ENCODE measurements at regions of chr20 and their contacts with region 1.

Region 1: GRCh38 chr20:32779500-32780211 is 17.5 kb downstream of the DNMT3B start:
- DNase-seq: no peak
- H3K4me3 Mint-ChIP-seq: no peak overlapping the region
- H3K27ac Mint-ChIP-seq: no peak overlapping the region
- H3K4me1 Mint-ChIP-seq: peaks cover 35% of the 10 kb centered on the region
- H3K27me3 Mint-ChIP-seq: no peaks in the 10 kb centered on the region
- CTCF ChIP-seq: no peak

Region 2: GRCh38 chr20:32521780-32522525 is 257.7 kb before region 1 on chr20:
- CTCF ChIA-PET with region 1: no interaction called
- intact Hi-C with region 1: loop called (anchors 5 kb)
- DNase-seq: peak; percentile 89
- H3K4me3 Mint-ChIP-seq: no peak overlapping the region
- H3K27ac Mint-ChIP-seq: no peak overlapping the region
- H3K4me1 Mint-ChIP-seq: no peaks in the 10 kb centered on the region
- H3K27me3 Mint-ChIP-seq: peaks cover 94% of the 10 kb centered on the region
- CTCF ChIP-seq: peak; percentile 90

Region 3: DNA sequence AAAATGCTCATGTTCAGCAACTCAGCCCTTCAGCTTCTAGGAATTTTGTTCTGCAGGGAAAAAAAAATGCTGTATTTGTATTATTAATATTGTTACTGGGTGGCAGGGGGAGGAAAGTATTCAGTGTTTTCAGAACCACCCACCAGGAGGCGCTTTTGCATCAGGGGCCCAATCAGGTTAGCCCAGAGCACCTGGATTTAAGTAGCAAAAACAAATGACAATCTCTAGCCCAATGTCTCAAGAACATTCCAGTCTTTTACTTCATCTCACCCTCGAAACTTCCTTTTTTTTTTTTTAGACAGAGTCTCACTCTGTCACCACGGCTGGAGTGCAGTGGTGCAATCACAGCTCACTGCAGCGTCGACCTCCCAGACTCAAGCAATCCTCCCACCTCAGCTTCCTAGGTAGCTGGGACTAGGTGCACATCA is 105.3 kb before region 1 on chr20:
- CTCF ChIA-PET with region 1: interaction called, 85 read pairs
- intact Hi-C with region 1: loop called (anchors 1 kb)
- DNase-seq: peak; percentile 83
- H3K4me3 Mint-ChIP-seq: no peak overlapping the region
- H3K27ac Mint-ChIP-seq: no peak overlapping the region
- H3K4me1 Mint-ChIP-seq: no peaks in the 10 kb centered on the region
- H3K27me3 Mint-ChIP-seq: no peaks in the 10 kb centered on the region
- CTCF ChIP-seq: peak; percentile 88

Region 4: DNA sequence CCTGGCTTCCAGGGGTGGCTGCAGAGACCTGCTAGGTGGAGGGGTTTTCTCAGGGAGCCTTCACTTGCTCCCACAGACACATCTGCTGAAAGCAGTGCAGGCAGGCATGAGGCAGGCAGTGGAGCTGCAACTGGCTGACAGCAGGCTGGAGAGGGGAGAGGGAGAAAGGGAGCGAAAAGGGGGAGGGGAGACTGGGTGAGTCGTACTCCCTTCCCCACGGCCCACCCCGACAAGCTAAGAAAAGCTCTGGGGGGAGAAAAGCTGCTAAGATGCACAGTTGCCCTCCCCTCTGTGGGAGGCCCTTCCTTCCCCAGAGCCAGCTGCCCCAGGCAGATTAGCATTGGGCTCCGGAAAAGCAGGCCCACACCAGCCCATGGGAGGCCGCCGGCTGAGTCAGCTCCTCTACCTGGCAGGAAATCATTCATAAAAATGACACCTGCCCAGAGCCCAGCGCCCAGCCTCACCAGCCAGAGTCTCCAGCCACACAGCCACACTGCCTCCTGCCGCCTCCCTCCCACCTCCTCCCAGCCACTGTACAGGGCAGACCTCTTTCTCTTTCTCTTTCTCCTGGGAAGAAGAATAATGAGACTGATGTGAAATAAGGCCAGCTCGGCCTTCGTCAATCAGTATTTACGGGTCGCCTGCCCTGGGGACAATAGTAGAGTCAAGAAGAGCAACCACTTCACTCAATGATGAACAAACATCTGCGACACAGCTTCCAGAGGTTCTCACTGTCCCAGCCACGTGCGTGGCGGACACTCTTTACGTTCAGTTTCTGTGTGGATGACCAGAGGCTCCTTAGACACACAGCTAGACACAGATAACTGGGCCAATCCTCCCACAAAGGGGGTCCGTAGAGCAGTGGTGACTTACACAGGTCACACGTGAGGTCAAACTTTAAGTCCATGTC is 98.2 kb before region 1 on chr20:
- CTCF ChIA-PET with region 1: interaction called, 16 read pairs
- intact Hi-C with region 1: no loop called
- DNase-seq: peak; percentile 79
- H3K4me3 Mint-ChIP-seq: no peak overlapping the region
- H3K27ac Mint-ChIP-seq: no peak overlapping the region
- H3K4me1 Mint-ChIP-seq: peaks cover 11% of the 10 kb centered on the region
- H3K27me3 Mint-ChIP-seq: no peaks in the 10 kb centered on the region
- CTCF ChIP-seq: no peak

Region 5: GRCh38 chr20:32731393-32732266 is 48.0 kb before region 1 on chr20:
- CTCF ChIA-PET with region 1: interaction called, 8 read pairs
- intact Hi-C with region 1: loop called (anchors 5 kb)
- DNase-seq: peak; percentile 69
- H3K4me3 Mint-ChIP-seq: peak overlapping the region; percentile 45
- H3K27ac Mint-ChIP-seq: peak overlapping the region; percentile 86
- H3K4me1 Mint-ChIP-seq: peaks cover 27% of the 10 kb centered on the region
- H3K27me3 Mint-ChIP-seq: no peaks in the 10 kb centered on the region
- CTCF ChIP-seq: no peak

Region 6: DNA sequence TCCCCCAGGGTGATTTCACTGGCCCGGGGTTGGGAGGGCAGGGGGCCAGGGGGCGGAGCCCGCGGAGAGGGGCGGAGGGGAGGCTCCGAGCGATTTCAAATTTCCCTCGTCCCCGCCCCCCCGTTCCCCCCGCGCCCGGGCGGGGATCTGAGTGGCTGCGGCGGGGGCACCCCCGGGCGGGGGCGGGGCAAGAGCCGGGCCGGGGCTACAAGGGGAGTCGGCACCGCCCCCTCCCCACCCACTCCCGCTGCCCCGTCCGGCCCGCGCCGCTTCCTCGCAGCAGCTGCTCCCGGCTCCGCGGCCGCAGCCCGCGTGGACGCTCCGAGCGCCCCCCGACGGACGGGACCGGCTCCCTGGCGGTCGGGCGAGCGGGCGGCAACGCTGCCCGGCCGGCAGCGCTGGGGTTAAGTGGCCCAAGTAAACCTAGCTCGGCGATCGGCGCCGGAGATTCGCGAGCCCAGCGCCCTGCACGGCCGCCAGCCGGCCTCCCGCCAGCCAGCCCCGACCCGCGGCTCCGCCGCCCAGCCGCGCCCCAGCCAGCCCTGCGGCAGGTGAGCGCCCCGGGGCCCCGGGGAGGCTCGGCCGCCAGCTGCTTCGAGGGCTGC is 17.4 kb before region 1 on chr20 and contains the start of gene DNMT3B:
- CTCF ChIA-PET with region 1: interaction called, 33 read pairs
- intact Hi-C with region 1: no loop called
- DNase-seq: peak; percentile 92
- H3K4me3 Mint-ChIP-seq: peak within 1 kb of the TSS; percentile 93
- H3K27ac Mint-ChIP-seq: peak within 1 kb of the TSS; percentile 86
- H3K4me1 Mint-ChIP-seq: peaks cover 27% of the 10 kb centered on the region
- H3K27me3 Mint-ChIP-seq: no peaks in the 10 kb centered on the region
- CTCF ChIP-seq: no peak
- total RNA-seq, gene DNMT3B: 8.4 and 10.8 TPM in 2 replicates

Region 7: DNA sequence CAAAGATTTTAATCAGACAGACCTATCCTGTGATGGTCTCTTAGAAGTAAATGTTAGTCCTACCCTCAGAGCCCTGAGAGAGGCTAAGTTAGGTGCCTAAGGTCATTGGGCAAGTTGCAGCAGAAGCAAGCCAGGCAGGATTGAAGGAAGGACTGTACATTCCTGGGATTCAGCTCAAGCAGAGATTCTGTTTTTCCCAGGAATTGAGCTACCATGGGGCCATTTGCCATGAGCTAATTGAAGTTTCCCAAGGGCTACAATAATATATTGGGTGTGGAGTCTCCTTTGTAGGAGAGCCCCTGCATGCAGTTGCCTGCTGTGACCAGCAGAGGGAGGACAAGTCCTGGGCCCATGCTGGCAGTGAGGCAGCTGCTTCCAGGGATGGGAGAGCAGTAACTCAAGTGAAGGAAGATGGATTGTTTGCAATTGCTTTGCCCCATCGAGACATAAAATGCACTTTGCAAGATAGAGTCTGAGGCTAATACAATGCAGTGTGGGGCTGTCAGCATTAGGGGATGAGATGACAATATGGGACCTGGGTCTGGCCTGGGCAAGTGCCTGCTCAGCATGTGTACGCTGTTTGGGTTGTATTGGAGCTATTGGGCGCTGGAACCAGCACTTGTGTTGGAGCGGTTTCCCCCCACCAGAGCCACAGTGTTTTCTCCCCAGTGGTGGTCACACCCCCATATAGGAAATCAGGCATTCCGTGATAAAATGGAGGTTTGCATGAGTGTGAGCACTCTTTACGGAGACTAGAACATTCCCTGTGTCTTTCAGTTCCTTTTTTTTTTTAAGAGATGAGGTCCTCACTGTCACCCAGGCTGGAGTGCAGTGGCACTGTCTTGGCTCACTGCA is 10.5 kb after region 1 on chr20:
- CTCF ChIA-PET with region 1: interaction called, 20 read pairs
- intact Hi-C with region 1: no loop called
- DNase-seq: peak; percentile 90
- H3K4me3 Mint-ChIP-seq: no peak overlapping the region
- H3K27ac Mint-ChIP-seq: no peak overlapping the region
- H3K4me1 Mint-ChIP-seq: peaks cover 8% of the 10 kb centered on the region
- H3K27me3 Mint-ChIP-seq: no peaks in the 10 kb centered on the region
- CTCF ChIP-seq: peak; percentile 100